GM13976 (cell line): ENCODE measurements at regions of chr20 and their contacts with region 1.

Region 1: DNA sequence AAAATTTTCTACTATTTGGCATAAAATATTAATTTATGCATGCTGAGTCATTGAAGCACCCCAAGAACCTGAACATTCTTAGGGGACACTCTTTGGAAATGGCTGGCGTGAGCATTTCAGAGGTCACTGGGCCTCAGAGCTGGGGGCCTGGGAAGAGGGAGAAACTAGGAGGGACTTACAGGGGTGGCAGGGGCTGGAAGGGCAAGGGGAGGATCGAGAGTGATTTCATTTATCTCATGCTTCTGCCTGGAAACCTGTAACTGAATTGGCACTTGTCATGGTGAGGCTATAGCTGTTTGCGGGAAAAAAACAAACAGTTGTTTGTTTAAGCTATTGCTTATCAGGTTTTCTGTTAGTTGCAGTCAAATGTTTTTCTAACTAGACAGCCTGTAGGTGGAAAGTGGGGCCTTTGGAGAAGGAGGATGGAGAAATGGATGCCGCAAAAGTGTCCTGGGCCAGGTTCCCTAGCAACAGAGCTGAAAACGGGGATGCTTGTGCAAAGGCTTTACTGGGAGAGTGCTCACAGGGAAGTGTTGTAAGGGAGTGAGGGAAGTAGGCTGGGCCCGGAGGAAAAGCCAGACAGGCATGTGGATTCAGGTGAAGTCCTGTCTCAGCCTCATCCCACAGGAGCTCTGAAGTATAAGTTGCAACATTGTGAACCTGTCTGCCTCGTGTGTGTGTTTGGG is 36.4 kb upstream of the KAT14 start:
- DNase-seq: no peak
- CTCF ChIP-seq: no peak

Region 2: DNA sequence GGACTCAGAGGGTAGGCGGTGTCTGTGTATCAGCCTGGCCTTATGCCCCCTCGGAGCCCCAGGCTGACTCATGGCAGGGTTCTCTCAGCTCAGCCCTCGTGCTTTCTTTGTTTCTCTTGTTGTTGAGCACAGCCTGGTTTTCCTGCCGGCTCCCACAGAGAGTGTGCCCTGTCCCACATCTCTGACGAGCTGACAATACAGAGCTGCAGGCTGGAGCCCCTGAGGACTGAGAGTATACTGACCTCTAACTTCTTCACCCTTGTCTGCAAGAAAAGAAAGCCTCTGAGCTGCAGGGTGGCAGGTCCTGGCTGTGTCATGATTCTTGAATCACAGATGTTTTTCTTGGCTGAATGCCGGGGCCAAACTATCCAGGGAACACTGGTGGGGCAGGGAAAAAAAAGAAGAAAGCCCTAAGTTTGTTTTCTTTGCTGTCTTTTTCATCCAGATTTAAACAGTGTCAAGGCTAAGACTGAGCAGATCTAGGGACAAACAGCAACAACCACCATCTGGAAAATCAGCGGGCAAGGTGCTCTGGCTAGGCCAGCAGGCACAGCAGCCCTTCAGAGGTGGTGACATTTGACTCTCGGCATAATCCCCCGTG is 123.8 kb after region 1 on chr20:
- in situ Hi-C with region 1: loop called (anchors 25 kb)
- DNase-seq: no peak
- CTCF ChIP-seq: no peak